Activated CD4-positive, alpha-beta T cell treated with anti-CD3 and anti-CD28 coated beads, Interleukin-2, amount 10 ng/mL, durations not matched to agents 24 days and 14 days (primary cell): ENCODE measurements at regions of chr7 and their contacts with region 1.

Region 1: GRCh38 chr7:50610521-50611277 is 45.5 kb upstream of the DDC start:
- DNase-seq: peak; percentile 86
- H3K4me3 Mint-ChIP-seq: no peak overlapping the region
- H3K27ac Mint-ChIP-seq: no peak overlapping the region
- H3K4me1 Mint-ChIP-seq: peaks cover 24% of the 10 kb centered on the region
- H3K27me3 Mint-ChIP-seq: peaks cover 22% of the 10 kb centered on the region

Region 2: DNA sequence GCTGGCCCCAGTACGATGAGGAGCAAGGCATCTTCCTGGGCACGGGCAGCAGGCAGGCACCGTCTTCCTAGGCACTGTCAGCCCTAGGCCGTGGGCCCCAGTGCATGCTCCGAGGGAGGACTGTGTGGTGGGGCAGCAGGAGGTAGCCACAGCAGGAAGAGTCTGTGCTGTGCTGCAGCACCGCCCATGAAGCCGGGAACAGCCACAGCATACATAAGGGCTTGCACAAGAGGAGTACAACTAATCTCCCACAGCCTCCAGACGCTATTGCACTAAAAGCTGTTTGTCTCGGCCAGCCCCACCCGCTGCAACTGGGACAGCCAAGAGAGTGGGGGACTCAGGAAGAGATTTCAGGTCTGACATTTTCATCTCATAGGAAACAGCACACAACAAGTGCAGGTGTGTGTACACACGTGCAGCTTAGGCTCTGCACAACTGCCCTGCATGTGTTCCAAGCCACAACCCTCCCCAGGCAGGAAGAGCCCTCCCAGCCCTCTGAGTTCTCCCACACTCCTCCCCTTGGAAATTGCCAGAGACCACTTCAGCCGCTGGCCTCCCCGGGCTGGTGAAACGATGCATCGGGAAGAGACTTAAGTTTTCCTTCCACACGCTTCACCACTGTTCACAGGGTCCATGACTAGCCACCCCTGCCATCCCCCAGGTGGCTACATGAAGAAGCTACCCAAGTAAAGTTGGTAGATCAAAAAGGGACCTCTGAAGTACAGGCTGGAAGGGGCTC is 42.6 kb after region 1 on chr7:
- intact Hi-C with region 1: no loop called
- DNase-seq: no peak
- H3K4me3 Mint-ChIP-seq: no peak overlapping the region
- H3K27ac Mint-ChIP-seq: no peak overlapping the region
- H3K4me1 Mint-ChIP-seq: no peaks in the 10 kb centered on the region
- H3K27me3 Mint-ChIP-seq: peaks cover 11% of the 10 kb centered on the region

Region 3: DNA sequence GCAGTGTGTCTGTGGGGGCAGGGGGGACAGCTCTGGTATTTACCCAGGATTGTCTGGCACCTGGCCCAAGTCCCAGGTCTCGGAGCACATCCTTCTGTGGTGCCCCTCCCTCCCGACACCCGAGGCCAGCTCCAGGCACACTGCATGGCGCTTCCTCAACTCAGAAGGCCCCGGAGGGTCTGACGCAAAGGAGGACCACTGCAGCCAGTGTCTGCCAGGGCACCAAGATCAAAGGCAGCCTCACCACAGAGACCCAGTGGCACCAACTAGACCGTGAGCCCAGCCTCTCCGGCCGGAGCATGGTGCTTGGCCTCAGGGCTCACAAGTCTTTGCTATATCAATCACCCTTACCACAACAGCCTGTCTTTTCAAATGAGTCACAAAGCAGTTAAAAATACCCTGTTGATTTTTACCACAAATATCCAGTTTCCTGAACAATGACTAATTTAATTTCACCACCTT is 53.8 kb after region 1 on chr7:
- intact Hi-C with region 1: loop called (anchors 5 kb)
- DNase-seq: peak; percentile 68
- H3K4me3 Mint-ChIP-seq: no peak overlapping the region
- H3K27ac Mint-ChIP-seq: no peak overlapping the region
- H3K4me1 Mint-ChIP-seq: peaks cover 46% of the 10 kb centered on the region
- H3K27me3 Mint-ChIP-seq: peaks cover 2% of the 10 kb centered on the region

Region 4: GRCh38 chr7:51123322-51124029 is 512.8 kb after region 1 on chr7:
- intact Hi-C with region 1: loop called (anchors 5 kb)
- DNase-seq: peak; percentile 81
- H3K4me3 Mint-ChIP-seq: no peak overlapping the region
- H3K27ac Mint-ChIP-seq: peak overlapping the region; percentile 78
- H3K4me1 Mint-ChIP-seq: peaks cover 27% of the 10 kb centered on the region
- H3K27me3 Mint-ChIP-seq: no peaks in the 10 kb centered on the region